ENCODE measurements at regions of chr15 and their contacts with region 1.

Region 1: GRCh38 chr15:73697033-73697467 is 12.9 kb downstream of the CD276 start:
- DNase-seq: peak; percentile 91
- H3K4me3 Mint-ChIP-seq: peak overlapping the region; percentile 33
- H3K27ac Mint-ChIP-seq: peak overlapping the region; percentile 29
- H3K4me1 Mint-ChIP-seq: peaks cover 56% of the 10 kb centered on the region
- H3K27me3 Mint-ChIP-seq: peaks cover 55% of the 10 kb centered on the region

Region 2: GRCh38 chr15:73560501-73561117 is 136.4 kb before region 1 on chr15:
- CTCF ChIA-PET with region 1: interaction called, 32 read pairs
- POLR2A ChIA-PET with region 1: no interaction called
- DNase-seq: no peak
- H3K4me3 Mint-ChIP-seq: no peak overlapping the region
- H3K27ac Mint-ChIP-seq: no peak overlapping the region
- H3K4me1 Mint-ChIP-seq: peaks cover 13% of the 10 kb centered on the region
- H3K27me3 Mint-ChIP-seq: no peaks in the 10 kb centered on the region

Region 3: DNA sequence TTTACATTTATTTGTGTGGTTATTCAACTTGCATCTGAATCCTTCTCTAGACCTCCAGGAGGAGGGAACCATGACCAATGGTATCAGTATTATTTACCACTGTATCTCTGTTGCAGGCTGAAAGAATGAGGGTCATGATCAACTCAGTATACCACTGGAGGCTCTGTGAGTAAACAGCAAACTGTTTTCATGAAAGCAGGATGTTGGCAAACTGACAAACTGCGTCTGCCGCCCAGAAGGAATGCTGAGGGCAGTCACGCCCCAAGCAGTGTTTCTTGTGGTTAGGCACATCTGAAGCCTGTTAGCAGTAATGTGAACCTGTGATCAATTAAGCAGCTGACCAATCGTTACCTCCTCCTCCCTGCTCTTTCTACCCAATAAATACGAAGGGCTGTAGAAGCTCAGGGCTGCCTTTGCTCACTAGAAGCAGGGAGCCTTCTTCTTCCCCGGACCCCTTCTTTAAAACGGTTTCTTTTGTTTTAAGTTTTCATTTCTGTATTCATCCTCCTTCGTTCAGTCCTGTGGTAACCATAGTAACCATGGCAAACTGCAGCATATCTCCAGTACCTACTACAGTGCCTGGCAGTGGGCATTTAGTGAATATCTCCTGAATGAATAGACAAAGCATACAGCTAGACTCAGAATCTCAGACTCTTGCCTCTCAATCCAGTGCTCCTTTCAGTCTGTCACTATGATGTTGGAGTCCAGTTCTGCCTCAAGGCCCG is 57.4 kb before region 1 on chr15:
- CTCF ChIA-PET with region 1: interaction called, 172 read pairs
- POLR2A ChIA-PET with region 1: interaction called, 20 read pairs
- DNase-seq: no peak
- H3K4me3 Mint-ChIP-seq: no peak overlapping the region
- H3K27ac Mint-ChIP-seq: no peak overlapping the region
- H3K4me1 Mint-ChIP-seq: peaks cover 28% of the 10 kb centered on the region
- H3K27me3 Mint-ChIP-seq: peaks cover 43% of the 10 kb centered on the region

Region 4: DNA sequence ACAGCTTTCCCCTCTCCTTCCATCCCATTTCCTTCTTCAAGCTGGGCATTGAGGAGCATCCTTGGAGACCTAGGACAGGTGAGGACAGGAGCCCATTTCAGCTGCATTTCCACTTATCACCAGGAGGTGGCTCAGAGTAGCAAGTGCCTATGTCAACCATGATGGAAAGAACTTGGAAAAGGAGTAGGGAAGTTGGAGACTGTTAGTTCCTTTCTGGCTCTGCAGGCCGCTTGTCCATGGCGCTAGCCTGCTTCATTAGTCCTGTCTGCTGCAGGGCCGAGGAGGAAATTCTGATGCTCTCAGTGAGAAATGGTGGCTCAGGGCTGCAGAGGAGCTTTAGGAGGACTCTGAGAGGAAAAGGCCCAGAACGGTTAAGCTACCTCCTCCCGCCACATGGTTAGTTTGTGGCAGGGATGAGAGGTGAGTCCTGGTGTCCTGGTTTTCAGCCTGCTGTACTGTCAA is 19.9 kb before region 1 on chr15:
- CTCF ChIA-PET with region 1: interaction called, 76 read pairs
- POLR2A ChIA-PET with region 1: interaction called, 30 read pairs
- DNase-seq: peak; percentile 55
- H3K4me3 Mint-ChIP-seq: no peak overlapping the region
- H3K27ac Mint-ChIP-seq: no peak overlapping the region
- H3K4me1 Mint-ChIP-seq: peaks cover 17% of the 10 kb centered on the region
- H3K27me3 Mint-ChIP-seq: peaks cover 36% of the 10 kb centered on the region

Region 5: DNA sequence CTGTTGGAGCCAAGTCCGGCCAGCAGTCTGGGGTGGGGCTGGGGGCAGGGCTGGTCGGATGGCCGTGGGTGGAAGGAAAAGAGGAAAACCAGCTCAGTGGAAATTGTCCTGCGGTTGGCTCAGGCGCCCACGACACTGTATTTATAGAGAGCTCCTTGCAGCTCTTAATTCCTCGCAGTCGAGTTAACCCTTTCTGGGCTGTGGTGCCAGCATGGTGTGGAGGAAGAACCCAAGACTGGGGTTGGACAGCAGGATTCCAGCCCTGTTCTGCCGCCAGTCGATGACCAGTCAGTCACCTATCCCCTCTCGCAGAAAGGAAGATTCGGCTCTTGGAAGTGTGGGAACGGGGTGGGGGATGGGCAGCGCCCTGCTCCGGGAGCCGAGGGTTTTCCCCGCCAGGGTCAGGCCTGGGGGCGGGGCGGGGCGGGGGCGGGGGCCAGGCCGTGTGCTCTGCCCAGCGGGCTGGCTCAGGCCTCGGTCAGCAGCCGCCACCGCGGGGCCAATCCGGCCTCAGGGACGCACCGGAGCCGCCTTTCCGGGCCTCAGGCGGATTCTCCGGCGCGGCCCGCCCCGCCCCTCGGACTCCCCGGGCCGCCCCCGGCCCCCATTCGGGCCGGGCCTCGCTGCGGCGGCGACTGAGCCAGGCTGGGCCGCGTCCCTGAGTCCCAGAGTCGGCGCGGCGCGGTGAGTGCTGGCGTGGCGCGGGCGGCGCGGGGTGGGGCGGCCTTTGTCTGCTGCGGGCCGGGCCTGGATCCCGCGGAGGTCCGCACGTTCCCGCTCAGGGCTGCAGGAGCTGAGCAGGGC is 13.1 kb before region 1 on chr15 and contains the start of gene CD276:
- CTCF ChIA-PET with region 1: interaction called, 23 read pairs
- POLR2A ChIA-PET with region 1: interaction called, 30 read pairs
- DNase-seq: no peak
- H3K4me3 Mint-ChIP-seq: peak within 1 kb of the TSS; percentile 48
- H3K27ac Mint-ChIP-seq: no peak within 1 kb of the TSS
- H3K4me1 Mint-ChIP-seq: peaks cover 10% of the 10 kb centered on the region
- H3K27me3 Mint-ChIP-seq: peaks cover 60% of the 10 kb centered on the region
- total RNA-seq, gene CD276: 0.88 to 1.6 TPM